Transverse colon (tissue), 4 donors: ENCODE measurements at regions of chr11 and their contacts with region 1.

Region 1: GRCh38 chr11:12888525-12889158 is 120.5 kb upstream of the RASSF10 start:
- DNase-seq: peak; percentile 89
- H3K4me3 ChIP-seq: no peak overlapping the region
- H3K27ac ChIP-seq: peak overlapping the region; percentile 67 to 77 (median 74)
- H3K4me1 ChIP-seq: peaks cover 0 to 20% (median 9%) of the 10 kb centered on the region in 4 donors
- H3K27me3 ChIP-seq: no peaks in the 10 kb centered on the region
- CTCF ChIP-seq: peak; percentile 62 to 85 (median 68)
- EP300 ChIP-seq: no peak
- POLR2A ChIP-seq: no peak

Region 2: DNA sequence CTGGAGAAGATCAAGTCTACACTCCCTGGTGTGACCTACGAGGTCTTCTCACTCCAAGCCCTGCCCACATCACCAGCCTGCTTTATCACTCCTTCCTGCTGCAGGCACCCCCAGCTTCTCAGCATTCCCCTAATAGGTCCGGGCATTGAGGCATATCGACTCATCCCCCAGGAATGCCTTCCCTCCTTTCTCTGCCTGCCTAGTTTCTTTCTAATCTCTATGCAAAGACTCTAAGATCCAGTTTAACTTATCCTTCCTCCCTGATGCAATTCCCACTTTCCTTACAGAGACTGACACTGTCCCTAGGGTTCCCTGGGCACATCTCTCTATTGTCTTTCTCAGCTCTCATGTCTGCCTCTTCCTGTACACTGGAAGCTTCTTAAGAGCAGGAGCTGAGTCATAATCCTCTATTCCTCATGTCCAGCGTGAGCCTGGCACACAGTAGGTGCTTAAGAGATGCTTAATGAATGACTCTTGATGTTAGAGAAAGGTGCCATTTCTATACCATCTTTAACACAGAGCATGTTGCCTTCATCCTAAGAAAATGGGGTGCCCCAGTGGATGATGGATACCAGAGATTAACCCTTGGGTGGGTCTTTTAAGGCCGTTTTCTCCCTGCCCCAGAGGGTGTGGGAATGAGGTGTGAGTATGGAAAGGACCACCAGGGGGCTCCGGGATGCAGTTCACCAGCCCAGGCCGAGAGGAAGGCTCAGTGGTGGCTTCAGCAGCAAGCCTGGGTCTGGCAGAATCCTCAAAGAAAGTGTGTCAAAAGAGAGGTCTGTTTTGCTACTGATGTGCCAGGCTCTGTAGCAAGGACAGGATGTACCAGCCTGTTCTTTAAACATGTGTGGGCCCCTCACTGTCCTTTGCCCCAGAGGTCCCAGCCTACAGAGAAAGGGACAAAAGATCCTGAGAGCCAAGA is 476.6 kb before region 1 on chr11:
- in situ Hi-C with region 1: loop called in 2 of 4 experiments (anchors 10 to 25 kb)
- intact Hi-C with region 1: no loop called
- DNase-seq: peak; percentile 69
- H3K4me3 ChIP-seq: no peak overlapping the region
- H3K27ac ChIP-seq: peak overlapping the region; percentile 82 to 99 (median 92)
- H3K4me1 ChIP-seq: peaks cover 12 to 59% (median 24%) of the 10 kb centered on the region in 4 donors
- H3K27me3 ChIP-seq: no peaks in the 10 kb centered on the region
- CTCF ChIP-seq: peak; percentile 58 to 83 (median 66)
- EP300 ChIP-seq: peak; percentile 86
- POLR2A ChIP-seq: no peak

Region 3: GRCh38 chr11:12680246-12680939 is 208.2 kb before region 1 on chr11:
- in situ Hi-C with region 1: loop called in 3 of 4 experiments (anchors 10 to 25 kb)
- intact Hi-C with region 1: loop called (anchors 5 kb)
- DNase-seq: peak; percentile 91
- H3K4me3 ChIP-seq: peak overlapping the region in 1 of 4 donors; percentile 17
- H3K27ac ChIP-seq: peak overlapping the region; percentile 96 to 100 (median 98)
- H3K4me1 ChIP-seq: peaks cover 22 to 82% (median 67%) of the 10 kb centered on the region in 4 donors
- H3K27me3 ChIP-seq: no peaks in the 10 kb centered on the region
- CTCF ChIP-seq: no peak
- EP300 ChIP-seq: no peak
- POLR2A ChIP-seq: peak; percentile 84

Region 4: GRCh38 chr11:12813371-12814225 is 75.0 kb before region 1 on chr11:
- in situ Hi-C with region 1: no loop called
- intact Hi-C with region 1: loop called (anchors 10 kb)
- DNase-seq: peak; percentile 38
- H3K4me3 ChIP-seq: no peak overlapping the region
- H3K27ac ChIP-seq: peak overlapping the region; percentile 39 to 83 (median 76)
- H3K4me1 ChIP-seq: peaks cover 9 to 41% (median 25%) of the 10 kb centered on the region in 4 donors
- H3K27me3 ChIP-seq: no peaks in the 10 kb centered on the region
- CTCF ChIP-seq: no peak
- EP300 ChIP-seq: no peak
- POLR2A ChIP-seq: no peak